Posterior cingulate gyrus (tissue), 11 donors: ENCODE measurements at regions of chr12 and their contacts with region 1.

Region 1: DNA sequence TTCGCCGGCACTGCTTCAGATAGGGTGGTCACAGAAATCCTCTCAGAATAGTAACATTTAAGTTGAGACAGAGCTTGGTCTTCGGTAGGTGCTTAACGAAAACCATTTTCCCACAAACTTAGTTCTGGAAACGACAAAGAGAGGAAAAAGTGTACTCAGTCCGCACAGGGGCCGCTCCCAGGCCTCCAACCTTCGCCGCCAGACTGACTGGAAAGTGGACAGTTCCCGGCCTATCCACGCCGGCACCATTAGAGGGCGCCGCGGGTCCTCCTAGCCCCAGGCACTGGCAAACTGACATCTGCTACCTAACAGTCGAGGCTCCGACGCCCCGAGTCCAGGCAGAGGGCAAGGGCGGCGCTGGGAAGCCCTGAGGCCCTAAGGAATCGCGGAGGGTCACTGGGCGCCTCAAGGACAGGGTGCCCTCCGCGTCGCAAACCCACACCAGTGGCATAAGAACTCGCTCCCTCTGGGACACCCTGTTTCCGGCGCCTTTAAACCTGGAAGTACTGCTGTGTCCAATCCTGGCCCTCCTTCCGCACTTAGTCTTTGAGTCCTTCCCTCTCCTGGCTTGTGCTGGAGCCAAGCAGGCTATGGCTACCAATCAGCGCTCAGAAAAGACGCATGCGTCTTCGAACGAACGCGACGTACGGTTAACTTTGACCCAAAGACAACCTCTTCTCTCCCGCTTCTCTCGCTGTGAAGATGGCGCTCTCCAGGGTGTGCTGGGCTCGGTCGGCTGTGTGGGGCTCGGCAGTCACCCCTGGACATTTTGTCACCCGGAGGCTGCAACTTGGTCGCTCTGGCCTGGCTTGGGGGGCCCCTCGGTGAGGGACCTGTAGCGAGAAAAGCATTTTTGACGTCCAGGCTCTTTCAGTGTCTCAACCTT is at the start of gene LETMD1:
- DNase-seq: peak; percentile 91 to 99 (median 95)

Region 2: GRCh38 chr12:51341259-51342007 is 293.5 kb after region 1 on chr12:
- intact Hi-C with region 1: loop called (anchors 5 kb)
- DNase-seq: peak in 5 of 10 donors; percentile 58 to 87 (median 69)

Region 3: GRCh38 chr12:51391283-51392162 is 343.6 kb after region 1 on chr12 and contains the start of gene GALNT6:
- intact Hi-C with region 1: no loop called
- DNase-seq: peak in 3 of 10 donors; percentile 10 to 87 (median 60)